Activated CD4-positive, alpha-beta T cell treated with anti-CD3 and anti-CD28 coated beads for 36 hours (primary cell): ENCODE measurements at regions of chr9 and their contacts with region 1.

Region 1: DNA sequence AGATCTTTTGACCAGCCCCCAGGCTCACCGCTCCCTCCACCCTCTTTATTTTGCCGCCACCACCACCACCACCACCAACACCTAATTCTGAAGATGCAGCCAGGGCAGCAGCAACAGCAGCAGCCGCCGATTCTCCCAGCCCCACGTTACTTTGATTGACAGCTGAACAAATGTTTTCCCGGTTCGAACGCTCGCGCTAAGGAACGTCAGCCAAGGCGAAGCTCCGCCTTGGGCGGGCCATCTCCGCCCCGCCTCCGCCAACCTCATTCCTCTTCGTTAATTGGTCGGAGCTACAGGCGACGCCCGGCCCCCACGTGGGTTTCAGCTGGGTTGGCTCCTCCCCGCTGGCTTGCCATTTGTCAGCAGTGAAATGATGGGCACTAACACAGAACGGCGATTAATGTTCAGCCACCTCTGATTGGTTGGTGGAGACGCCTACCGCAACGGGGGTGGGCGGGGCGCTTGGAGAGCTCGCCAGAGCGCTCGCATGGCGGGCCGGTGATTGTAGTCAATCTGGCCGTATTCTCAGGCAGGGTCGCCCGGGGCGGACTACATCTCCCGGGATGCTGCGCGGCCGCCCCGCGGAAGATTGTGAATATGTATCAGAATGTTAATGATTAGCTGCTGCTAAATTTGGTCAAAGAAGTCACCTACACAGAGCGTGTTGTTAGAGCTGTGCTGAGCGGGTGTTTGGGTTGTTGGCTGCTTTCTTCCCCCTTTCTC is at the start of gene TLE4:
- DNase-seq: peak; percentile 100
- ATAC-seq: peak; percentile 90
- H3K4me3 Mint-ChIP-seq: no peak within 1 kb of the TSS
- H3K27ac Mint-ChIP-seq: peak within 1 kb of the TSS; percentile 58
- H3K4me1 Mint-ChIP-seq: peaks cover 31% of the 10 kb centered on the region
- H3K27me3 Mint-ChIP-seq: peaks cover 12% of the 10 kb centered on the region
- total RNA-seq, gene TLE4: 11.8 to 15.5 TPM

Region 2: GRCh38 chr9:78296893-78297671 is 1274.4 kb before region 1 on chr9 and contains the start of gene PSAT1:
- CTCF ChIA-PET with region 1: no interaction called
- POLR2A ChIA-PET with region 1: no interaction called
- intact Hi-C with region 1: loop called (anchors 2 to 5 kb)
- DNase-seq: peak; percentile 96
- ATAC-seq: peak; percentile 98
- H3K4me3 Mint-ChIP-seq: peak within 1 kb of the TSS; percentile 91
- H3K27ac Mint-ChIP-seq: peak within 1 kb of the TSS; percentile 97
- H3K4me1 Mint-ChIP-seq: peaks cover 29% of the 10 kb centered on the region
- H3K27me3 Mint-ChIP-seq: no peaks in the 10 kb centered on the region
- total RNA-seq, gene PSAT1: 145 to 190 TPM

Region 3: DNA sequence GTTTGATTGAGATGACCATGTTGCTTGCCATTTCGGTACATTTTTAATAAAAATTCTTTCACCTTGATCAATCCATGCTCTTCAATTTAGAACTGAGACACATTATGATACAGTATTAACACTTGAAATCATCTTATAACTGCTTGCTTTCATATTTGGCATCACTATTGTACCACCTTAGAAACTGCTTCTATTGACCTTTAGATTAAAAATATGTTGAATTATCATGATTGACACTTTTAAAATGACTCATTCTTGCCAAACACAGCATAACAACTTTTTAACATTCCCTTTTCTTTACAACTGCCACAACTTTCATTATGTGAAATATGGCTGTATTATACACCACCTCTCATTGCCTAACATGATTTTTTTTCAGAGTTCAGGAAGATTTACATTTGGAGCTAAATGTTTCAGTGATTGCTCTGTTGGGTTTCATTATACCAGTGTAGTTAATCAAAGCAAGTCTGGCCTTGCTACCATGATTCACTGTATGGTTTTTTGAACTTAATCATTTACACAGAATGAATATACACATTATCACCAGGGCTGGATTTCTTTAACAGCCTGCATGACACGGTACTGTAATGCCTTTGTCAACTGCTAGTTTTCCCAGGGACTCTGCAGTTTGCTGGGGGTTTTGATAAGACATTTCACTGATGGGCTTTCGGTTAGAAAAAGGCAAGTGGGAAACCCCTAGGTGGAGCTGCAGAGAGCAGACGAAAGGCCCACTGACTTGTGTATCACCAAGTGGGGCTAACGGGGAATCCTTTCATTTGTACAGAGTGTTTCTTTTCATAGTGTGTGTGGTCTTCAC is 93.3 kb before region 1 on chr9:
- CTCF ChIA-PET with region 1: no interaction called
- POLR2A ChIA-PET with region 1: interaction called, 6 read pairs
- intact Hi-C with region 1: loop called (anchors 2 to 5 kb)
- DNase-seq: peak; percentile 32
- ATAC-seq: peak; percentile 92
- H3K4me3 Mint-ChIP-seq: no peak overlapping the region
- H3K27ac Mint-ChIP-seq: peak overlapping the region; percentile 21
- H3K4me1 Mint-ChIP-seq: peaks cover 11% of the 10 kb centered on the region
- H3K27me3 Mint-ChIP-seq: no peaks in the 10 kb centered on the region

Region 4: DNA sequence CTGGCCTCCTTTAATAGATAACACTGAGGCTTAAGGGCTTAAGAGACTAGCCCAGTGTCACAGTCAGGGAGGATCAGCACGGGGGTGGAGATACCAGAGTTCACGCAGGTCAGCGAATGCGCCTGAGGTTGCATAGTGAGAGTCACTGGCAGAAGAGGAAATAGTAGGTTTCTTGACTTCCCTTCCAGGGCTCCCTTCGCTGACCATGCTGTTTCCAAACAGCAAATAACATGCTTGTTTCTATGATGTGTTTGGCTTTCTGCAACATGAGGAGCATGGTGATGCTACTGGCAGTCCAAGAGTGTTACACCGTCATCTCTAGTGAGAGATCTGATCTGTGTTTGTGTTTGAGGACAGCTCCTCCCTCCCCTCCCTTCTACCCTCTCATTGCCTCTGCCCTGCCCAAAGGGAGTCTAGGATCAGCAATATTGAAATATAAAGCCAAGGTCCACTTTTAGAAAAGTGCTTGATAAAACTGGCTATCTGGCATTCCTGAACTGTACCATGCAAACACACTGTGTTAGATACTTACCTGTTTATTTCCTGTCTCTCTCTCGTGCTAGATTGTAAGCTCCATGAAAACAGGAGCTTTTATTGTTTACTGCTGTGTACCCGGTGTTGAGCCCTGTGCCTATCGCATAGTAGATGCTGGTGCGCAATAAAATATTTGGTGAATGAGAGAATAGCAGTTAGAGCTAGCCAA is 12.6 kb after region 1 on chr9:
- CTCF ChIA-PET with region 1: interaction called, 4 read pairs
- POLR2A ChIA-PET with region 1: interaction called, 14 read pairs
- intact Hi-C with region 1: loop called (anchors 1 kb)
- DNase-seq: peak; percentile 68
- ATAC-seq: peak; percentile 86
- H3K4me3 Mint-ChIP-seq: peak overlapping the region; percentile 24
- H3K27ac Mint-ChIP-seq: peak overlapping the region; percentile 30
- H3K4me1 Mint-ChIP-seq: peaks cover 67% of the 10 kb centered on the region
- H3K27me3 Mint-ChIP-seq: no peaks in the 10 kb centered on the region

Region 5: GRCh38 chr9:79686381-79687130 is 115.1 kb after region 1 on chr9:
- CTCF ChIA-PET with region 1: no interaction called
- POLR2A ChIA-PET with region 1: no interaction called
- intact Hi-C with region 1: loop called (anchors 2 to 10 kb)
- DNase-seq: no peak
- ATAC-seq: peak; percentile 25
- H3K4me3 Mint-ChIP-seq: no peak overlapping the region
- H3K27ac Mint-ChIP-seq: peak overlapping the region; percentile 49
- H3K4me1 Mint-ChIP-seq: peaks cover 34% of the 10 kb centered on the region
- H3K27me3 Mint-ChIP-seq: no peaks in the 10 kb centered on the region

Region 6: GRCh38 chr9:79883073-79883645 is 311.7 kb after region 1 on chr9:
- CTCF ChIA-PET with region 1: no interaction called
- POLR2A ChIA-PET with region 1: no interaction called
- intact Hi-C with region 1: loop called in 1 of 2 experiments (anchors 10 kb)
- DNase-seq: peak; percentile 39
- ATAC-seq: peak; percentile 70
- H3K4me3 Mint-ChIP-seq: no peak overlapping the region
- H3K27ac Mint-ChIP-seq: no peak overlapping the region
- H3K4me1 Mint-ChIP-seq: peaks cover 57% of the 10 kb centered on the region
- H3K27me3 Mint-ChIP-seq: no peaks in the 10 kb centered on the region